B cell (primary cell): ENCODE measurements at regions of chr10 and their contacts with region 1.

Region 1: GRCh38 chr10:101441541-101442455 is 87.8 kb downstream of the BTRC start:
- DNase-seq: peak; percentile 50
- ATAC-seq: peak; percentile 71
- H3K4me3 ChIP-seq: no peak overlapping the region
- H3K4me3 Mint-ChIP-seq: no peak overlapping the region
- H3K27ac ChIP-seq: no peak overlapping the region
- H3K27ac Mint-ChIP-seq: no peak overlapping the region
- H3K4me1 ChIP-seq: no peaks in the 10 kb centered on the region
- H3K4me1 Mint-ChIP-seq: peaks cover 1% of the 10 kb centered on the region
- H3K27me3 ChIP-seq: no peaks in the 10 kb centered on the region
- H3K27me3 Mint-ChIP-seq: no peaks in the 10 kb centered on the region
- CTCF ChIP-seq: peak; percentile 50

Region 2: GRCh38 chr10:101161494-101162299 is 280.1 kb before region 1 on chr10:
- CTCF ChIA-PET with region 1: interaction called, 3 read pairs
- POLR2A ChIA-PET with region 1: no interaction called
- intact Hi-C with region 1: loop called (anchors 5 kb)
- DNase-seq: peak; percentile 82
- ATAC-seq: peak; percentile 88
- H3K4me3 ChIP-seq: no peak overlapping the region
- H3K4me3 Mint-ChIP-seq: peak overlapping the region; percentile 18
- H3K27ac ChIP-seq: no peak overlapping the region
- H3K27ac Mint-ChIP-seq: no peak overlapping the region
- H3K4me1 ChIP-seq: peaks cover 4 to 15% of the 10 kb centered on the region in 2 donors
- H3K4me1 Mint-ChIP-seq: peaks cover 16% of the 10 kb centered on the region
- H3K27me3 ChIP-seq: peaks cover 0 to 54% (median 34%) of the 10 kb centered on the region in 4 experiments
- H3K27me3 Mint-ChIP-seq: peaks cover 69% of the 10 kb centered on the region
- CTCF ChIP-seq: peak; percentile 96

Region 3: GRCh38 chr10:101272229-101272868 is 169.4 kb before region 1 on chr10:
- CTCF ChIA-PET with region 1: interaction called, 29 read pairs
- POLR2A ChIA-PET with region 1: no interaction called
- intact Hi-C with region 1: loop called (anchors 1 kb)
- DNase-seq: peak; percentile 67
- ATAC-seq: peak; percentile 57
- H3K4me3 ChIP-seq: no peak overlapping the region
- H3K4me3 Mint-ChIP-seq: no peak overlapping the region
- H3K27ac ChIP-seq: no peak overlapping the region
- H3K27ac Mint-ChIP-seq: no peak overlapping the region
- H3K4me1 ChIP-seq: no peaks in the 10 kb centered on the region
- H3K4me1 Mint-ChIP-seq: peaks cover 2% of the 10 kb centered on the region
- H3K27me3 ChIP-seq: peaks cover 0 to 15% (median 4%) of the 10 kb centered on the region in 4 experiments
- H3K27me3 Mint-ChIP-seq: peaks cover 33% of the 10 kb centered on the region
- CTCF ChIP-seq: peak; percentile 74

Region 4: DNA sequence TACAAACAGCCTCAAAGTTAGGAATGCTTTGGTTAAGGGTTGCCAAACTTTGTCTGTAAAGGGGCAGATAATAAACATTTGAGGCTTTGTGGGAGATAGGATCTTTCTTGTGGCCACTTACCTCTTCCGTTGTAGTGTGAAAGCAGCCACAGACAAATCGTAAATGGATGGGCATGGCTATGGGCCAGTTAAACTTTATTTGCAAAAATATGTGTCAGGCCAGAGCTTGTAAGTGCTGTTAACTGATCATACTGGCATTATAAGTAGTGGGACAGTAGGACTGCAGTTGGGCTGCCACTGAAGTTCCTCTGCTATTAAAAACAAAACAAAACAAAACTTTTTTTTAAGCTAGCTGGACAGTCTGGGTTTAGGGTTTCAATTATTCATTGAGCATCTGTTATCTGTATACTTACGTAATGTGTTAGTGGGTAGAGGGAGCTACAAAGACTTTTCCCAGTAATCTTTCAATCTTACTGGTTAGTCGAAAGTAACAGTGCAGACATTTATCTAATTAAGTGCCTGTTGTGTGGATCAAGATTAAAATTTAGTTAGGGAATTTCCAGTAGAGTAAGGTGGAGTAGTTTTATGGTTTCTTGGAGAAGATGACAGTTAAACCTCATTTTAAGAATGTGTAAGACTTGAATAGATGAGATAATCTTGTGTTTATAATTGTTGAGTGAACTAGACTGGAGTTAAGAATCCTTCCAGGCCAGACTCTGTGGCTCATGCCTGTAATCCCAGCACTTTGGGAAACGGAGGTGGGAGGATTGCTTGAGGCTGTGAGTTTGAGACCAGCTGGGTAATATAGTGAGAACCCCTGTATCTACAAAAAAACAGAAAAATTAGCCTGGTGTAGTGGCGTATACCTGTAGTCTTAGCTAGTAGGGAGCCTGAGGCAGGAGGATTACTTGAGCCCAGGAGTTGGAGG is 12.3 kb after region 1 on chr10:
- CTCF ChIA-PET with region 1: interaction called, 10 read pairs
- POLR2A ChIA-PET with region 1: no interaction called
- intact Hi-C with region 1: no loop called
- DNase-seq: no peak
- ATAC-seq: no peak
- H3K4me3 ChIP-seq: no peak overlapping the region
- H3K4me3 Mint-ChIP-seq: no peak overlapping the region
- H3K27ac ChIP-seq: no peak overlapping the region
- H3K27ac Mint-ChIP-seq: no peak overlapping the region
- H3K4me1 ChIP-seq: peaks cover 8 to 15% of the 10 kb centered on the region in 2 donors
- H3K4me1 Mint-ChIP-seq: peaks cover 21% of the 10 kb centered on the region
- H3K27me3 ChIP-seq: no peaks in the 10 kb centered on the region
- H3K27me3 Mint-ChIP-seq: no peaks in the 10 kb centered on the region
- CTCF ChIP-seq: no peak